Mammary epithelial cell (primary cell): ENCODE measurements at regions of chr12 and their contacts with region 1.

Region 1: DNA sequence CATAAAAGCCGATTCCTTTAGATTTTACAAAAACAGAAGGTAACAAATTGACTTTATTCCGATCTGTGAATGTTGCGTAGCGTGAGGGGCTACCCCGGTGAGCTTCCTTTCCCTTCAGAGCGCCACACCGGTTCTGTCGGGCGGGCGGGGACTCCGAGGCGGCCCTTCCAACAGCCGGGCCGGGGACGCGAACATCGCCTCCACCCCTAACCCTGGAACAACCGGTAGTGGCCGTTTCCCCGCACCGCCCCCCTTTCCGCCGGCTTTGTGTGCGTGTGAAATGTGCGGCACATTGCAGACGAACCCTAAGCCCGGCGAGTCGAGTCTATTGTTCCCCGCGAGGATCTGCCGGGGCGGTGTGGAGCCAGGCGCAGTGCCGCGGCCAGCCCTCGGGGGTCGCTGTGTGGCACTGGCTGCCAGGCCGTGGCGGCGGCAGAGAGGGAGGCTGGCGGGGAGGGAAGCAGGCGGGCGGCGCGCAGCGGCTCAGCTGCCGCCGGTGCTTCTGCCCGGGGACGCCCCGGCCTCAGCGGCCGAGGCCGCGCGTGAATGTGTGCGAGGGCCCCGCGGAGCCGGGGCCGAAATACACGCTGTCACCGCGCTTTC is 775 bp upstream of the ARID2 start:
- DNase-seq: peak; percentile 97
- H3K4me3 ChIP-seq: peak overlapping the region; percentile 77 to 99 (median 86)
- H3K27ac ChIP-seq: peak overlapping the region; percentile 90
- H3K4me1 ChIP-seq: peaks cover 9% of the 10 kb centered on the region
- H3K27me3 ChIP-seq: no peaks in the 10 kb centered on the region
- CTCF ChIP-seq: peak; percentile 84

Region 2: DNA sequence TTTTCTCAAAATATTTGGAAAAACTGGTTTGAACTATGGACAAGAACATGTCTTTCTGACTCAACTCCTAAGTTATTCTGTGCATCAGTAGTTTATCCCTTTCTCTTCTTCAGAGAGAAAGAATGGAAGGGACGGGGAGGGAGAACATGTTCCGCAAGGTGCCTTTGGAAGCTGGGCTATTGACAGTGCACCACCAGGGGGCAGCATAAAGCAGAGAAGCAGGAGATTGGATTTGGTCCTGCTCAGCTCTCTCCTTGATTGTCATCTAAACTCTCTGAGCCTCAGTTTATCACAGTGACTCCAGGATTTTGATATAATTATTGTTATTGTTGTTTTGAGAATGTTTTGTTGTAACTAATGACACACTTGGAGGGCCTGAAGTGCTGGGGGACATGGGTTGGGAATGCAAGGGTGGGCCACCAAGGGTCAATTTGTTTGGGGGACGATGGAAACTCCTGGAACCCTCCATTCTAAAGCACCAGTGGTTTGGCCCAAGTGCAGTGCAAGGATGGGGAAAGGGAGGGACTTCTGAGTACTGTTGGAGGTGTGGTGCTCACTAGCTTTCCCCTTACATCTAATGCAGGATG is 558.2 kb before region 1 on chr12:
- CTCF ChIA-PET with region 1: no interaction called
- dilution Hi-C with region 1: no loop called
- in situ Hi-C with region 1: no loop called
- intact Hi-C with region 1: loop called (anchors 2 kb)
- DNase-seq: peak; percentile 44
- H3K4me3 ChIP-seq: no peak overlapping the region
- H3K27ac ChIP-seq: no peak overlapping the region
- H3K4me1 ChIP-seq: no peaks in the 10 kb centered on the region
- H3K27me3 ChIP-seq: no peaks in the 10 kb centered on the region
- CTCF ChIP-seq: peak; percentile 95

Region 3: DNA sequence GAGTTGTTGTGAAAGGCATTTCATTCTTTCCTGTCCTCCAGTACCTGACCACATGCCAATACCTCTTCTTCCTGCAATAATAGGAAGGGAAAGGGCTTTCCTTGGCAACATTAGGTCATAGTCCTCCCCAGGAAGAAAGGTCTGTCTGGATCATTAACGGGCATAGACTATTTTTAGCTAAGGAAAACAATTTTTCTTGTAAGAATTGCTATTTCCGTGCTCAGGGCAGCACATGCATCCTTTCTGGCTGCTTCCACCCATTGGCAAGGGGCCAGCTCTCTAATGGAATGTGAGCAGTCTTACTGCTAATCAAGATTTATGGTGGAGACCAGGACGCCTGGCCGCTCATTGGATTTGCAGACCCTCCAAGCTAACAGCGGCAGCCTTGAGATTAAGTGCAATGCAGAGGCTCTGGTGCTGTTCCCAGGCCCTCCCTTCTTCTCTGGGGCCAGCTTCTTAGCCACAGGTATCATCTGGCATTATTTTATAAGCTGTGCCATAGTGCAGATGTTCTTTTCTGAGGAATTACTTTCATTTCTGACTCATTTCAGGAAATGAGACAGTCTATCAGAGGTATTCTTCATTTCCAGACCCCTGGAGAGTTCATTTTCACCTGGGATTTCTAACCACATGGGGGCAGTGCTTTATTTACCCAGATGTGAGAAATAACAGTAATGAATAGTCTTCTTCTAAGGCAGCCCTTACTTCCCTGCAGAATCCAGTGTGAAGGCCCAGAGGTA is 459.9 kb before region 1 on chr12:
- CTCF ChIA-PET with region 1: no interaction called
- dilution Hi-C with region 1: no loop called
- in situ Hi-C with region 1: no loop called
- intact Hi-C with region 1: loop called (anchors 2 kb)
- DNase-seq: peak; percentile 88
- H3K4me3 ChIP-seq: peak overlapping the region in 2 of 3 experiments; percentile 2 to 35
- H3K27ac ChIP-seq: peak overlapping the region; percentile 82
- H3K4me1 ChIP-seq: peaks cover 36% of the 10 kb centered on the region
- H3K27me3 ChIP-seq: no peaks in the 10 kb centered on the region
- CTCF ChIP-seq: peak; percentile 54 to 57

Region 4: DNA sequence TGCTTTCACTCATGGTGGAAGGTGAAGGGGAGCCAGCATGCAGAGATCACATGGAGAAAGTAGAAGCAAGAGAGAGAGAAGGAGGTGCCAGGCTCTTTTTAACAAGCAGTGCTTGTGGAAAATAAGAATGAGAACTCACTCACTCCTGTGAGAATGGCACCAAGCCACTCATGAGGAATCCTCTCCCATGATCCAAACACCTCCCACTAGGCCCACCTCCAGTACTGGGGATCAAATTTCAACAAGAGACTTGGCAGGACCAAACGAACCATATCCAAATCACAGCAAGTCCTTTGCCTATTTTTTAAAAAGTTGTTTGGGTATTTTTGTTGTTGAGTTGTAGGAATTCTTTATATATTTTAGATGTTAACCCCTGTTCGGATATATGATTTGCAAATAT is 245.2 kb before region 1 on chr12:
- CTCF ChIA-PET with region 1: no interaction called
- dilution Hi-C with region 1: no loop called
- in situ Hi-C with region 1: no loop called
- intact Hi-C with region 1: no loop called
- DNase-seq: no peak
- H3K4me3 ChIP-seq: no peak overlapping the region
- H3K27ac ChIP-seq: no peak overlapping the region
- H3K4me1 ChIP-seq: no peaks in the 10 kb centered on the region
- H3K27me3 ChIP-seq: no peaks in the 10 kb centered on the region
- CTCF ChIP-seq: no peak

Region 5: DNA sequence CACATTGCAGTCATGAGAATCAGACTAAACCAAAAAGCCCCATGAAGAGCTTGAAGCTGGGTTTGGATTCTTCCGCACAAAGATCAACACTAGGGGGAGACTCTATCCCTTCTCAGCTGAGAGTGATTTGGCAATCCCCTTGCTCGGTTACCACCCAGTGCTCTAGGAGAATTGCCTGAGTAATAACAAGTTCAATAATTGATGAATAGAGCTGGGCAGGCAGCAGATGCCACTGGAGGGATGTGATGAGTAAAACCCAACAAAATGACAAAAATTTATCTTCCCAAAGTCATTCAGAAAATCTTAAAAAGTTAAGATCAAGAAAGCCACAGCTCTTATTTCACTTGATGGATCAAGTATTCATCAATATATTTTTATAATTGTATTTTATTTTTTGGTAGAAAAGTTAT is 184.8 kb before region 1 on chr12:
- CTCF ChIA-PET with region 1: interaction called, 7 read pairs
- dilution Hi-C with region 1: no loop called
- in situ Hi-C with region 1: loop called in 1 of 2 experiments (anchors 10 kb)
- intact Hi-C with region 1: loop called (anchors 1 kb)
- DNase-seq: peak; percentile 55
- H3K4me3 ChIP-seq: no peak overlapping the region
- H3K27ac ChIP-seq: no peak overlapping the region
- H3K4me1 ChIP-seq: no peaks in the 10 kb centered on the region
- H3K27me3 ChIP-seq: no peaks in the 10 kb centered on the region
- CTCF ChIP-seq: peak; percentile 77 to 88

Region 6: DNA sequence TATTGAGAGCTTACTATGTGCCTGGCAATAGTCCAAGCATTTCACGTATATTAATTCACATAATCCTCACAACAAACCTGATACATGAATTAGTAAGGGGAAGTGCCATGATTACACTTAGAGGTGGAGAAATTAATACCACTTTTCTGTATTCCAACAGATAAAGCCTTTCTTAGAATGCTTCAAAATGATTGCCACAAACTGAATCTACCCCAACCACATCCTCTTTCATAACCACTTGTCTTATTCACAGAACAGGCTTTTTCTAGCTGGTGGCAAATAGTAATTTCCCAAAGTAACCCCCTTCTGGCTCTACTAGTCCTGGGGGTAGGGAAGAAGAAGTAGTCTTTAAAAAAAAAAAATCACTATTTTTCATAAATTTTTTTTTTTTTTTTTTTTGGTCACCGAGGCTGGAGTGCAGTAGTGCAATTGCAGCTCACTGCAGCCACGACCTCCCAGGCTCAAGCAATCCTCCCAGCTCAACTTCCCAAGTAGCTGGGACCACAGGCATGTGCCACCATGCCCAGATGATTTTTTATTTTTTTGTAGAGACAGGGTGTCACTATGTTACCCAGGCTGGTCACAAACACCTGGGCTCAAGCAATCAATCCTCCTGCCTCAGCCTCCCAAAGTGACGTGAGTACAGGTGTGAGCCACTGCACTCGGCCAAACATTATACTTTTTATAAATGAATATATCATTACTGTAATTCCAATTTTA is 58.2 kb before region 1 on chr12:
- CTCF ChIA-PET with region 1: no interaction called
- dilution Hi-C with region 1: no loop called
- in situ Hi-C with region 1: no loop called
- intact Hi-C with region 1: loop called (anchors 5 kb)
- DNase-seq: peak; percentile 53
- H3K4me3 ChIP-seq: no peak overlapping the region
- H3K27ac ChIP-seq: no peak overlapping the region
- H3K4me1 ChIP-seq: peaks cover 9% of the 10 kb centered on the region
- H3K27me3 ChIP-seq: no peaks in the 10 kb centered on the region
- CTCF ChIP-seq: no peak

Region 7: DNA sequence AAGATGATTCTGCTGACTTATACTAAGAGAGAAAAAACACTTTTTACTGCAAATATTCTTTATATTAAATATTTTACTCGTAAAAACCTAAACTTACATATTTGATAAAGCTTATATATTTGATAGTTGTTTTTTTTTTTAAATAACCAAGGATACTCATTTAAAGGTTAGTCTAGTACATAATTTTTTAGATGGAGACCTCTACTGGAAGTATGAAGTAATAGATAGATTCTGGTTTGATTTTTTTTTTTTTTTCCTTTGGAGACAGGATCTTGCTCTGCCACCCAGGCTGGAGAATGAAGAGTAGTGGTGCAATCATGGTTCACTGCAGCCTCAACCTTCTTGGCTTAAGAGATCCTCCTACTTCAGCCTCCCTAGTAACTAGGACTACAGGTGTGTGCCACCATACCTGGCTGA is 17.1 kb after region 1 on chr12:
- CTCF ChIA-PET with region 1: interaction called, 15 read pairs
- dilution Hi-C with region 1: no loop called
- in situ Hi-C with region 1: no loop called
- intact Hi-C with region 1: loop called (anchors 2 kb)
- DNase-seq: peak; percentile 24
- H3K4me3 ChIP-seq: no peak overlapping the region
- H3K27ac ChIP-seq: no peak overlapping the region
- H3K4me1 ChIP-seq: no peaks in the 10 kb centered on the region
- H3K27me3 ChIP-seq: no peaks in the 10 kb centered on the region
- CTCF ChIP-seq: peak; percentile 22 to 35

Region 8: DNA sequence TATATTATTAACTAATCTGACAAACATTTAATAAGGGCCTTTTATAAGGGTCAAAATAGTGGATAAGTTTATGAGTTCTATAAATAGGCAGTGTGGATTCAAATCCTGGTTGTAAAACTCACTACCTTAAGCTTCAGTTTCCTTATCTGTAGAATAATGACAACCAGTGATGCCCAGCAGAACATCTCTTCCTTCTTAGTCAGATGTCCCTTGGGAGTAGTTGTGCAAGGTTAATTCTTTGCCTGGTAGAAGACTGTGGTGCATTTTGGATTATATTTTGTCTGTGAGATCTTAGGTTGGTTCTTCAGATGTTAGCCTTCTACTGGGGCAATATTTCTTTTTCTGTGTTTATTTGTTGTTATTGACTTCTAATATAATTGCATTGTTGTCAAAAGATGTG is 60.3 kb after region 1 on chr12:
- CTCF ChIA-PET with region 1: no interaction called
- dilution Hi-C with region 1: no loop called
- in situ Hi-C with region 1: no loop called
- intact Hi-C with region 1: no loop called
- DNase-seq: no peak
- H3K4me3 ChIP-seq: no peak overlapping the region
- H3K27ac ChIP-seq: no peak overlapping the region
- H3K4me1 ChIP-seq: no peaks in the 10 kb centered on the region
- H3K27me3 ChIP-seq: no peaks in the 10 kb centered on the region
- CTCF ChIP-seq: no peak